ENCODE measurements at regions of chr20 and their contacts with region 1.

Region 1: GRCh38 chr20:35883778-35884540 is 70.3 kb downstream of the SCAND1 start:
- DNase-seq: peak; percentile 88
- H3K4me3 Mint-ChIP-seq: no peak overlapping the region
- H3K27ac Mint-ChIP-seq: no peak overlapping the region
- H3K4me1 Mint-ChIP-seq: peaks cover 10% of the 10 kb centered on the region
- H3K27me3 Mint-ChIP-seq: no peaks in the 10 kb centered on the region

Region 2: GRCh38 chr20:35601008-35601973 is 282.7 kb before region 1 on chr20:
- intact Hi-C with region 1: loop called (anchors 10 kb)
- DNase-seq: peak; percentile 95
- H3K4me3 Mint-ChIP-seq: peak overlapping the region; percentile 81
- H3K27ac Mint-ChIP-seq: peak overlapping the region; percentile 63
- H3K4me1 Mint-ChIP-seq: peaks cover 9% of the 10 kb centered on the region
- H3K27me3 Mint-ChIP-seq: peaks cover 61% of the 10 kb centered on the region

Region 3: GRCh38 chr20:35816339-35816738 is 67.6 kb before region 1 on chr20:
- intact Hi-C with region 1: no loop called
- DNase-seq: no peak
- H3K4me3 Mint-ChIP-seq: no peak overlapping the region
- H3K27ac Mint-ChIP-seq: no peak overlapping the region
- H3K4me1 Mint-ChIP-seq: peaks cover 17% of the 10 kb centered on the region
- H3K27me3 Mint-ChIP-seq: no peaks in the 10 kb centered on the region